ENCODE measurements at regions of chr20 and their contacts with region 1.

Region 1: DNA sequence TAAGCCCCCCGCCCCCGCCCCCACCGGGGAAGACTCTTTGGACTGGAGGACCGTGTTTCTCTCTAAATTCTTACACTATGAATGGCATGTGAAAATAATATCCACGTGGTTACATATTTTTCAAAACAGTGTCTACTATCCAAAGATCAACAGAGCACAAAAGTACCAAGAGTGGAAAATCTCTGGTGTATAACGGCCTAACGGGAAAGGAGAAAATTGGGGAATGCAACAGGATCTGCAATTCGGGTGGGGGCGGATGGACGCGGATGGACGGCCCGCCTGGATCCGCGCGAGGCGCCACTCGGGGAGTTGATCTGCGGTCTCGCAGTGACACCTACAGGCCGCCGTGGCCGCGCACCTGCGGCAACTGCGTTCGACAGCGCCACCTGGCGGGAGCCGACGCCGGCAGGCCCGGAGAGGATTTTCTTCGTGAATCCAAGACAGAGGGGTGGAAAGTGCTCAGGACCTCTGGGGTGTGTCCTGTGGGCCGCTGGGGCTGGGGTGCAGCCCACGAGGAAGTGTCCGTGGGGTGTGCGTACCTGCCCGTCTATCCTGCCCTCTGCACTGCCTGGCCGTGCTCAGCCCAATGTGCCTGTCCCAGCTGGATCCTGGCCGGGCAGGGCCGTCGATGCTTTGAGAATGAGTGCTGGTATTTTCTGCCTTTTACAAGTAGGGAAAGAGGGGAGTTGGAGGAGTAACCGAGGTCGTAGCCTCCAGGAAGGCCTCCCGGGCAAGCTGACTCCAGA is 18.6 kb downstream of the ANKRD60 start:
- DNase-seq: peak; percentile 78
- H3K4me3 ChIP-seq: no peak overlapping the region
- H3K27ac ChIP-seq: no peak overlapping the region
- H3K4me1 ChIP-seq: no peaks in the 10 kb centered on the region
- H3K27me3 ChIP-seq: no peaks in the 10 kb centered on the region
- CTCF ChIP-seq: peak; percentile 100

Region 2: DNA sequence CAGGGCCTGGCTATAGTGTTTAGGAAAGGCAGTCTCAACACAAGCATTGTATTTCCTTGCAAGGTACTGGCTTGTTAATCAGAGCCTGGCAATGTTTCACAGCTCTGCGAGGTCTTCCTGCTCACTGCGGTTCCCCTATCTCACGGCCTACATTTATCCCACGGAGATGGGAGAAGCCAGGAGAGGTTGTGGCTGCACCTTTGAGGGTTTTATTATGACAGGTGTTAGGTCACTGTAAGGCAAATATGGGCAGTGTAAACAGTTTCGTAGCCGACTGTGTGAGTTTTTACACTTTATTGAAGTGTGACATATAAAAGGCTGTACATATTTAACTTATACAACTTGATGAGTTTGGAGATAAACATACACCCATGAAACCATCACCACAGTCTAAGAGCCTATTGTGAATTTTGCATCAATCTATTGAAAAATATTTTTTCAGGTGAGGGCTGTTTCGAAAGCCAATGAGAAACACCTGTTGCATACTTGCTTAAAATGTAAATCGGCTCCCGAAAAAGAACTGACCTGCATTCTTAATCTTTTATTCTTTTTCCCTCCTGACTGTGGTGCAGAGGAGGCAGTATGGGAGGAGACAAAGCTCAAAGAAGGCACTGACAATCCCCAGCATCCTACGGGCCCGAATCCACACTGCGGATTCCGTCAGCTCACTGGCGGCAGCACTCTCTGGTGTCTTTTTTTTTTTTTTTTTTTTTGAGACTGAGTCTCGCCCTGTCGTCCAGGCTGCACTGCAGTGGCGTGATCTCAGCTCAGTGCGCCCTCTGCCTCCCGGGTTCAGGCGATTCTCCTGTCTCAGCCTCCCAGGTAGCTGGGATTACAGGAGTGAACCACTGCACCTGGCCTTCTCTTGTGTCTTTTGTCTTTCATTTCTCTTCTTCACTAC is 826.1 kb before region 1 on chr20:
- CTCF ChIA-PET with region 1: no interaction called
- POLR2A ChIA-PET with region 1: no interaction called
- intact Hi-C with region 1: loop called (anchors 5 kb)
- DNase-seq: no peak
- H3K4me3 ChIP-seq: no peak overlapping the region
- H3K27ac ChIP-seq: no peak overlapping the region
- H3K4me1 ChIP-seq: no peaks in the 10 kb centered on the region
- H3K27me3 ChIP-seq: no peaks in the 10 kb centered on the region
- CTCF ChIP-seq: no peak

Region 3: GRCh38 chr20:57514273-57514751 is 695.5 kb before region 1 on chr20:
- CTCF ChIA-PET with region 1: no interaction called
- POLR2A ChIA-PET with region 1: no interaction called
- intact Hi-C with region 1: loop called (anchors 5 kb)
- DNase-seq: peak; percentile 68
- H3K4me3 ChIP-seq: no peak overlapping the region
- H3K27ac ChIP-seq: no peak overlapping the region
- H3K4me1 ChIP-seq: no peaks in the 10 kb centered on the region
- H3K27me3 ChIP-seq: no peaks in the 10 kb centered on the region
- CTCF ChIP-seq: peak; percentile 75

Region 4: DNA sequence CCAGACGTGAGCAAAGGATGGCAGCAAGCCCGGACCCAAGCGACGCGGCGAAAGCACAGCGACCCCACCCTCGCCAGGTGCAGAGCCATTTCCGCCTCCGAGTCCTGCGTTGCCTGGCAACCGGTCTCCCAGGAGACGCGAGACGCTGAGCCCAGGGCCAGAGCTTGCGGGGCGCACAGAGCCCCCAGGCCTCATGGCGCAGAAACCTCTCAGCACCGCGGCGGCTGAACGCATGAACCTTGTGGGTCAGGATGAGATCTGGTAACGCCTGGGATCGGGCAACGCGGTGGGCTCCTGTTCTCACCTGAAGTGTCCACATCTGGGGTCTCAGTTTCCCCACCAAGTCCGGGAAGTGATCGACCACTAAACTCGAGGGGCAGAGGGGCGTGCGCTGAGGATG is 59.1 kb before region 1 on chr20:
- CTCF ChIA-PET with region 1: no interaction called
- POLR2A ChIA-PET with region 1: no interaction called
- intact Hi-C with region 1: no loop called
- DNase-seq: no peak
- H3K4me3 ChIP-seq: no peak overlapping the region
- H3K27ac ChIP-seq: no peak overlapping the region
- H3K4me1 ChIP-seq: no peaks in the 10 kb centered on the region
- H3K27me3 ChIP-seq: peaks cover 12% of the 10 kb centered on the region
- CTCF ChIP-seq: no peak

Region 5: GRCh38 chr20:58188527-58188926 is 21.3 kb before region 1 on chr20:
- CTCF ChIA-PET with region 1: no interaction called
- POLR2A ChIA-PET with region 1: no interaction called
- intact Hi-C with region 1: no loop called
- DNase-seq: no peak
- H3K4me3 ChIP-seq: no peak overlapping the region
- H3K27ac ChIP-seq: no peak overlapping the region
- H3K4me1 ChIP-seq: no peaks in the 10 kb centered on the region
- H3K27me3 ChIP-seq: no peaks in the 10 kb centered on the region
- CTCF ChIP-seq: peak; percentile 24; the same call in 1 of the 2 replicates

Measured in A673 (cell line).